HEK293 (cell line): ENCODE measurements at regions of chr10 and their contacts with region 1.

Region 1: DNA sequence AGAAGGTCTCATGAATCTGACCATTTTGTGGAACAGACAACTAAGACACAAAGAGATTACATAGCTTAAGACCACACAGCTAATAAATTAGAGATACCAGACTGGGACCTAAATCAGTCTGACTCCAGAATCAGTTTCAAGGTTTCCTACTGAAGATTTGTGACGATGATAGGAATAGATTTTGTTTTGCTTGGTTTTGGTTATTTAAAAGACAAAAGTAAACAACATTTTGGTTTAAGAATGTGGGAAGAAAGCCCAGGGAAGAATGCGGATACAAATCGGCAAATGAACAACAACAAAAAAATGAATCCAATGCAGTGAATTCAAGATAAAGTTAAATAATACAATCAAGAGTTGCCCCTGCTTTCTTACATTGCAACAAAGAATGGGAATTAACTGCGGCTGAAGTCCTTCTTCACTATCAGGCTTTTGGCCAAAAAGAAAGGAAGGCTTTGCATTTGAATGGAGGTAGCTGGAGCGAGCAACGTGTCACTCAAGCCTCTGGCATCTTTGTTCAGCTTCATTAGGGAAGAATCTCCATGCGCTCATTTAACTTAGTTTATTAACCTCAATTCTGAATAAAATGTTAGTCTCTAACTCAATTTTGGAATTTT is 210.8 kb downstream of the ADAM12 start:
- H3K4me3 ChIP-seq: no peak overlapping the region
- H3K27ac ChIP-seq: no peak overlapping the region
- H3K4me1 ChIP-seq: no peaks in the 10 kb centered on the region
- CTCF ChIP-seq: no peak

Region 2: GRCh38 chr10:125531465-125531864 is 646.1 kb before region 1 on chr10:
- CTCF ChIA-PET with region 1: interaction called, 12 read pairs
- POLR2A ChIA-PET with region 1: no interaction called
- H3K4me3 ChIP-seq: no peak overlapping the region
- H3K27ac ChIP-seq: no peak overlapping the region
- H3K4me1 ChIP-seq: no peaks in the 10 kb centered on the region
- CTCF ChIP-seq: no peak